ENCODE measurements at regions of chr5 and their contacts with region 1.

Region 1: GRCh38 chr5:95781101-95781583 is 41.4 kb downstream of the GLRX start:
- DNase-seq: peak; percentile 38 to 85 (median 64)
- ATAC-seq: peak; percentile 93 to 98 (median 96)
- H3K4me3 ChIP-seq: no peak overlapping the region
- H3K4me3 Mint-ChIP-seq: peak overlapping the region; percentile 31 to 60 (median 52)
- H3K27ac ChIP-seq: no peak overlapping the region
- H3K27ac Mint-ChIP-seq: peak overlapping the region in 1 of 2 donors; percentile 22
- H3K4me1 ChIP-seq: peaks cover 0 to 10% of the 10 kb centered on the region in 2 experiments
- H3K4me1 Mint-ChIP-seq: peaks cover 9 to 19% (median 15%) of the 10 kb centered on the region in 3 donors
- H3K27me3 ChIP-seq: no peaks in the 10 kb centered on the region
- H3K27me3 Mint-ChIP-seq: no peaks in the 10 kb centered on the region

Region 2: GRCh38 chr5:95746722-95747679 is 34.1 kb before region 1 on chr5:
- CTCF ChIA-PET with region 1: no interaction called
- POLR2A ChIA-PET with region 1: no interaction called
- DNase-seq: no peak
- ATAC-seq: no peak
- H3K4me3 ChIP-seq: no peak overlapping the region
- H3K4me3 Mint-ChIP-seq: no peak overlapping the region
- H3K27ac ChIP-seq: no peak overlapping the region
- H3K27ac Mint-ChIP-seq: no peak overlapping the region
- H3K4me1 ChIP-seq: no peaks in the 10 kb centered on the region
- H3K4me1 Mint-ChIP-seq: peaks cover 0 to 6% (median 3%) of the 10 kb centered on the region in 3 donors
- H3K27me3 ChIP-seq: no peaks in the 10 kb centered on the region
- H3K27me3 Mint-ChIP-seq: peaks cover 0 to 5% of the 10 kb centered on the region in 2 donors

Region 3: DNA sequence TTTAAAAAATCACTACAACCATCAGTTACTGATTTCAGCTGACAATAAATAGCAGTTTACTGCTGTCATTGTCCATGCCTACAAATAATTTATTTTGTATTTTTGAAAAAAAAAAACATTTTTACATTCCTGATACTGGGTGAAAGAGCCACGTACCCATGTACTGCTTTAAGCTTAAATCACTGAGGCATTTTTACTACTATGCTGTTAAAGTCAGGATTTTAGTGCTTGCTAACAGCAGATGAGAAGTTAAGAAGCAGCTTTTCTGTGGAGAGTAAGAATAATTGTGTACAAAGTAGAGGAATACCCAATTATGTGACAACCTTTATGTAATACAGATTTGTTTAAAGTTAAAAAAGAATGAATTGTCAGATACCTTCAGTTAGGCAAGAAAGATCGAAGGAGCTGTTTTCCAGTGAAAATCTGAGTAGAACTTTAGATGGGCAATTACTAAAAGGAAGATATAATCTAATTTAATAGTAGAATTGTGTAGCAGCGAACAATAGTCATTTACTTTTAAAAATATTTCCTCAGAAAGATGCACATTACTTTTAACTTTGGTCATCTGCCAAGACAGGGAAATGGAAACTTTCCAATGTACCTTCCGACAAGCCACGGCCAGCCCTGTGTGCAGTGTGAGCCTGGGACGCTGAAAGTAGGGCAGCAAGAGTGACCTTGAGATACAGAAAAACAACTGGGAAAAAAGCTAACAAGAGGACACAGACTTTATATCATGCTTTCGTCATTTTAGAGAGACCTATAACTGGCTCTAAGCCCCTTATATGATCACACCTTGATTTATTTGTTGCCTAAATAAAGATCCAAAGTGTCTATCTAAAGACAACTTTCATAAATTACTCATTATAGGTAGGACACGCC is 10.1 kb before region 1 on chr5:
- CTCF ChIA-PET with region 1: interaction called, 9 to 10 read pairs
- POLR2A ChIA-PET with region 1: interaction called in 1 of 2 experiments, 3 read pairs
- DNase-seq: no peak
- ATAC-seq: no peak
- H3K4me3 ChIP-seq: no peak overlapping the region
- H3K4me3 Mint-ChIP-seq: no peak overlapping the region
- H3K27ac ChIP-seq: no peak overlapping the region
- H3K27ac Mint-ChIP-seq: no peak overlapping the region
- H3K4me1 ChIP-seq: no peaks in the 10 kb centered on the region
- H3K4me1 Mint-ChIP-seq: peaks cover 0 to 4% (median 0%) of the 10 kb centered on the region in 3 donors
- H3K27me3 ChIP-seq: peaks cover 0 to 4% of the 10 kb centered on the region in 2 experiments
- H3K27me3 Mint-ChIP-seq: no peaks in the 10 kb centered on the region

Region 4: DNA sequence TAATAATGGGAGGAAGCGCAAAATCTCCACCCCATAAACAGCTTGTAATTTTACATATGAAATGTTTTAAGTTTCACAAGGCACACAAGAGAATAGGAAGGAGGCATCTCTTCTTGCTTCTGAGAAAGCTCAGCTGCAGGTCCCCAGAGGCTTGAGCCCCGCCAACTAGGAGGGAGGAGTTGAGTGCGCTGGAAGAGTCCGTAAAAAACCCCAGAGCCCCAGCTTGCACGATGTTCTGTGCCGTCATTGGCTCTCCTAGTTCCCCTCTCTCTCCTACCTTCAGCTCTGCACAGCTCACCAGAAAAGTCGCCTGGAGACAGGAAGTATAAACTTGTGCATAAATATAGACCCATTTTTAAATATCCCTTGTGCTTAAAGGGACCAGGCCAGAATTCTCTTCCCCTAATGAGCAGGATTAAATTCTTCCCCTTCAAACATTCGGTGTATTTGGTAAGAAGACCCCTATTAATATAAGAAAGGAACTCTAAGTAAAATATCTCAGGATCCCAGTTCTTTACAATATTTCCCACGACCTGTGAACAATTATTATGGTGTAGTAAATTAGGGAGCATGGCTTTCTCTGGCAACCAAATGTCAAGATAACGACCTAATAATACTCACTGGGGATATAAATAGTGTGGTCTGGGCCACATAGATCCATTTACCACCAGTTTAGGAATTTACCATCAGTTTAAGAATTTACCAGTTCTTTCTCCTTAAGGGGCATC is 27.7 kb after region 1 on chr5:
- CTCF ChIA-PET with region 1: interaction called, 14 to 45 read pairs
- POLR2A ChIA-PET with region 1: interaction called in 1 of 2 experiments, 3 read pairs
- DNase-seq: peak; percentile 46 to 92 (median 84)
- ATAC-seq: peak; percentile 99
- H3K4me3 ChIP-seq: no peak overlapping the region
- H3K4me3 Mint-ChIP-seq: peak overlapping the region; percentile 25 to 73 (median 59)
- H3K27ac ChIP-seq: peak overlapping the region; percentile 88
- H3K27ac Mint-ChIP-seq: peak overlapping the region; percentile 95 to 98
- H3K4me1 ChIP-seq: peaks cover 44 to 54% of the 10 kb centered on the region in 2 experiments
- H3K4me1 Mint-ChIP-seq: peaks cover 61 to 66% (median 64%) of the 10 kb centered on the region in 3 donors
- H3K27me3 ChIP-seq: no peaks in the 10 kb centered on the region
- H3K27me3 Mint-ChIP-seq: no peaks in the 10 kb centered on the region

Region 5: GRCh38 chr5:95822542-95823181 is 41.5 kb after region 1 on chr5 and contains the start of gene GLRX:
- CTCF ChIA-PET with region 1: interaction called, 14 to 17 read pairs
- POLR2A ChIA-PET with region 1: no interaction called
- DNase-seq: peak in 29 of 35 experiments; percentile 10 to 70 (median 45)
- ATAC-seq: peak; percentile 44 to 57 (median 50)
- H3K4me3 ChIP-seq: peak within 1 kb of the TSS; percentile 59 to 99
- H3K4me3 Mint-ChIP-seq: peak within 1 kb of the TSS; percentile 98 to 99 (median 98)
- H3K27ac ChIP-seq: peak within 1 kb of the TSS; percentile 86
- H3K27ac Mint-ChIP-seq: peak within 1 kb of the TSS; percentile 97 to 99
- H3K4me1 ChIP-seq: peaks cover 51 to 65% of the 10 kb centered on the region in 2 experiments
- H3K4me1 Mint-ChIP-seq: peaks cover 69 to 80% (median 75%) of the 10 kb centered on the region in 3 donors
- H3K27me3 ChIP-seq: no peaks in the 10 kb centered on the region
- H3K27me3 Mint-ChIP-seq: no peaks in the 10 kb centered on the region
- total RNA-seq, gene GLRX: 27.6 to 73.3 (median 56.8) TPM

Region 6: GRCh38 chr5:95846554-95847260 is 65.6 kb after region 1 on chr5:
- CTCF ChIA-PET with region 1: interaction called, 89 to 92 read pairs
- POLR2A ChIA-PET with region 1: interaction called in 1 of 2 experiments, 3 read pairs
- DNase-seq: peak; percentile 28 to 87 (median 60)
- ATAC-seq: peak; percentile 74 to 80 (median 76)
- H3K4me3 ChIP-seq: no peak overlapping the region
- H3K4me3 Mint-ChIP-seq: no peak overlapping the region
- H3K27ac ChIP-seq: no peak overlapping the region
- H3K27ac Mint-ChIP-seq: no peak overlapping the region
- H3K4me1 ChIP-seq: peaks cover 7 to 17% of the 10 kb centered on the region in 2 experiments
- H3K4me1 Mint-ChIP-seq: peaks cover 14 to 23% (median 22%) of the 10 kb centered on the region in 3 donors
- H3K27me3 ChIP-seq: no peaks in the 10 kb centered on the region
- H3K27me3 Mint-ChIP-seq: peaks cover 3% of the 10 kb centered on the region in 2 donors

Measured in T-cell (primary cell).